Naive thymus-derived CD8-positive, alpha-beta T cell (primary cell): ENCODE measurements at regions of chr4 and their contacts with region 1.

Region 1: GRCh38 chr4:173370477-173371291 is at the start of gene SAP30:
- DNase-seq: peak; percentile 91 to 99 (median 94)
- ATAC-seq: peak; percentile 82 to 89
- H3K4me3 Mint-ChIP-seq: peak within 1 kb of the TSS; percentile 95 to 100 (median 98)
- H3K27ac Mint-ChIP-seq: peak within 1 kb of the TSS; percentile 76 to 98 (median 96)
- H3K4me1 Mint-ChIP-seq: peaks cover 8 to 26% (median 17%) of the 10 kb centered on the region in 4 donors
- H3K27me3 Mint-ChIP-seq: peaks cover 8 to 29% (median 14%) of the 10 kb centered on the region in 5 donors
- polyA plus RNA-seq, gene SAP30: 1.2 to 5.3 (median 1.3) TPM

Region 2: DNA sequence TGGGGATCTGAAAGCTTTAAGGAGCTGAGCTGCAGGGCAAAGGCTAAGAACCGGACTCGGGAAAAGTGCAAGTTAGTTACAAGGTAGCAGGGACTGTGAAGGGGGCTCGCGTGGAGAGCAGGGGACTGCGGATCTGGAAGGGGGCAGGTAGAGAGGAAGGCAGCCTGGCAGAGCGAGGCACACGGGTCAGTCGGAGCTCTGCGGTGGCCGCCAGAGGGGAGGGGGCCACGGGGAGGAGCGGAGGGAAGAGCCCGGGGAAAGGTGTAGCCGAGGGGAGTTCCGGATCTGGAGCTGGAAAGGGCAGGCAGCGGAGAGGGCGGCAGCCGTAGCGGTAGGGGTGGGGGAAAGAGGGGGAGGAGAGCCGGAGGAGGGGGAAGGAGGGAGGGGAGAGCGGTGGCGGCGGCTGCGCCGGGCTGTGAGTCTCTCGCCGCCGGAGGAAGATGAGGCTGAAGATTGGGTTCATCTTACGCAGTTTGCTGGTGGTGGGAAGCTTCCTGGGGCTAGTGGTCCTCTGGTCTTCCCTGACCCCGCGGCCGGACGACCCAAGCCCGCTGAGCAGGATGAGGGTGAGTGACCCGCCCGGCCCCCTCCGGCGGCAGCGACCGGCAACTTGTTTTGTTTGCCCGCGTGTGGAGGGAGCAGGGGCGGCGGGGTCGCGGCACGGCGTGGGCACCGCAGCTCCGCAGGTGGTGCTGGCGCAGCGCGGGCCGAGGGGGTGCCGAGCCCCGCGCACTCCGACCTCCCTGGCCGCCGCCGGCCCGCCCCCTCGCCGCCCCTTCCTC is 202.1 kb before region 1 on chr4 and contains the start of gene GALNT7:
- POLR2A ChIA-PET with region 1: interaction called, 23 read pairs
- DNase-seq: peak; percentile 30 to 79 (median 54)
- ATAC-seq: peak; percentile 61 to 64
- H3K4me3 Mint-ChIP-seq: peak within 1 kb of the TSS; percentile 95 to 100 (median 98)
- H3K27ac Mint-ChIP-seq: peak within 1 kb of the TSS; percentile 85 to 96 (median 94)
- H3K4me1 Mint-ChIP-seq: peaks cover 28 to 63% (median 54%) of the 10 kb centered on the region in 4 donors
- H3K27me3 Mint-ChIP-seq: no peaks in the 10 kb centered on the region
- polyA plus RNA-seq, gene GALNT7: 5.6 to 8.6 (median 6.8) TPM

Region 3: DNA sequence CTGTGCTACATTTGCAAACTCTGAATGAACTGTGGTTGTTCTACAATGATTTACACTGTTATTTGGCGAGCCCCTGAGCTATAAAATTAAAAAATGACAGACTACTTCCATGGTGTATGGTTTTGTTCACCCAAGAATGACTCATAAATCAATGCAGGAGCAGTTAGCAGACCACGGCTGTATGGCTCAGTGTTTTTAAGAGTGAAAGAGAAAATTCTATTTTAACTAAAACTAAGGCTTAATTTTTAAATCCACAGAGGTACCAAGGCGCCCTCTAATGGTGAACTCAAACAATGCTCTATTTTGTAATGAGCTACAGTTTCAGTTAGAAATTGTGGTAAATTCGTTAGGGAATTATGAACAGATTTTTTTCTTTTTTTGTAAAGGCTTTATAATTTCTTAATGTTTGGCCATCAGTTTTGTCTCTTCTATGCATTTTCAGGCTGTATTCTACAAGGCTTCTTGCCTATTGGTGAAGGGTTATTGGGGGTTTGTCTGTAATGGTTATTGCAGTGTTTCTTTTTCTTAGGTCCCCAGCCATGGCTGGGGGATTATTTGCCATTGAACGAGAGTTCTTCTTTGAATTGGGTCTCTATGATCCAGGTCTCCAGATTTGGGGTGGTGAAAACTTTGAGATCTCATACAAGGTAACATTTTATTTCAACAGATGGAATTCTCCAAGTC is 69.0 kb before region 1 on chr4:
- POLR2A ChIA-PET with region 1: no interaction called
- DNase-seq: peak in 5 of 10 donors; percentile 4 to 37 (median 29)
- ATAC-seq: no peak
- H3K4me3 Mint-ChIP-seq: no peak overlapping the region
- H3K27ac Mint-ChIP-seq: peak overlapping the region in 1 of 10 donors; percentile 43
- H3K4me1 Mint-ChIP-seq: peaks cover 0 to 5% (median 2%) of the 10 kb centered on the region in 4 donors
- H3K27me3 Mint-ChIP-seq: no peaks in the 10 kb centered on the region

Region 4: DNA sequence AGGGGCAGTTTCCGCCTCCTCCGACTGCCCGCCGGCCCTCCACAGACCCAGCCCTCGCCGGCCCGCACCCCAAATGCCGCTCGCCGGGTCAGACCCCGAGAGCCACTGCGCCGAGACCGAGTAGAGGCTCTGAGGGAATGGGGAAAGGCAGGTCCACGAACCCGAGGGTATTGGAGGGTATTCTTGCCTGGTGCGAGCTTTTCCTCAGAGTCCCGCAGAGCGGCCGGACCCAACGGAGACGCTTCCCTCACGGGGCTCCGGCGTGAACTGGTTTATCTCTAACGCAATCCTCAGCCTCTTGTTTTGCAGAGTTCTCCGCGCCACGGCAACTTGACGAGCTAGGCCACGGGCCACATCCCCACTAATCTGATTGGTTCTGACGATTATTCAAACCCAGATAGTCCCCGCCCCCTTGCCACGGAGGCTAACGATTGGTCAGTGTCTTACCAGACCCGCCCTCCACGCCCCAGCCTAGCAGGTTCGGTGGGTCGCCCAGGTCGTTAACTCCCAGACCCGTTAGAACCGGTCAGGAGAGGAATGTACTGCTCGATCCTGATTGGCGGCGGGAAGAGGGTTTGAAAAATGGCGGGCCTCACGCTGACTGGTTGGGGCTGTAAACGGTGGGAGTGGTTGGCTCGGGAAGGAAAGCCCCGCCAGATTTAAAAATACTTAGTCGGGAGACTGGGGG is 36.5 kb before region 1 on chr4 and contains the start of gene HMGB2:
- POLR2A ChIA-PET with region 1: interaction called, 271 read pairs
- DNase-seq: peak; percentile 95 to 100 (median 100)
- ATAC-seq: peak; percentile 94
- H3K4me3 Mint-ChIP-seq: peak within 1 kb of the TSS; percentile 94 to 100 (median 99)
- H3K27ac Mint-ChIP-seq: peak within 1 kb of the TSS; percentile 94 to 100 (median 99)
- H3K4me1 Mint-ChIP-seq: peaks cover 19 to 33% (median 24%) of the 10 kb centered on the region in 4 donors
- H3K27me3 Mint-ChIP-seq: peaks cover 8 to 20% (median 11%) of the 10 kb centered on the region in 5 donors
- polyA plus RNA-seq, gene HMGB2: 102 to 154 (median 142) TPM

Region 5: GRCh38 chr4:173397604-173398003 is 26.9 kb after region 1 on chr4:
- POLR2A ChIA-PET with region 1: no interaction called
- DNase-seq: no peak
- ATAC-seq: no peak
- H3K4me3 Mint-ChIP-seq: no peak overlapping the region
- H3K27ac Mint-ChIP-seq: no peak overlapping the region
- H3K4me1 Mint-ChIP-seq: no peaks in the 10 kb centered on the region
- H3K27me3 Mint-ChIP-seq: peaks cover 2 to 11% (median 5%) of the 10 kb centered on the region in 5 donors